SK-N-SH (cell line): ENCODE measurements at regions of chr11 and their contacts with region 1.

Region 1: GRCh38 chr11:115912484-115912945 is 408.3 kb upstream of the CADM1 start:
- DNase-seq: no peak
- H3K4me3 ChIP-seq: no peak overlapping the region
- H3K27ac ChIP-seq: no peak overlapping the region
- H3K4me1 ChIP-seq: peaks cover 0 to 10% of the 10 kb centered on the region in 2 experiments; a peak in 1 of 4 replicates
- H3K27me3 ChIP-seq: no peaks in the 10 kb centered on the region
- CTCF ChIP-seq: peak; percentile 26; the same call in 1 of the 2 replicates
- EP300 ChIP-seq: no peak
- RAD21 ChIP-seq: peak; percentile 59

Region 2: GRCh38 chr11:115924744-115925567 is 12.4 kb after region 1 on chr11:
- CTCF ChIA-PET with region 1: interaction called, 16 read pairs
- POLR2A ChIA-PET with region 1: no interaction called
- DNase-seq: no peak
- H3K4me3 ChIP-seq: no peak overlapping the region
- H3K27ac ChIP-seq: no peak overlapping the region
- H3K4me1 ChIP-seq: peaks cover 0 to 18% of the 10 kb centered on the region in 2 experiments; a peak in 1 of 4 replicates
- H3K27me3 ChIP-seq: no peaks in the 10 kb centered on the region
- CTCF ChIP-seq: no peak
- EP300 ChIP-seq: no peak
- RAD21 ChIP-seq: no peak